Activated CD4-positive, alpha-beta T cell treated with anti-CD3 and anti-CD28 coated beads, Interleukin-2, amount 10 ng/mL, durations not matched to agents 24 days and 14 days (primary cell): ENCODE measurements at regions of chr19 and their contacts with region 1.

Region 1: GRCh38 chr19:45079063-45079910 is at the start of gene GEMIN7:
- DNase-seq: peak; percentile 95
- H3K4me3 Mint-ChIP-seq: peak within 1 kb of the TSS; percentile 100
- H3K27ac Mint-ChIP-seq: peak within 1 kb of the TSS; percentile 94
- H3K4me1 Mint-ChIP-seq: peaks cover 31% of the 10 kb centered on the region
- H3K27me3 Mint-ChIP-seq: no peaks in the 10 kb centered on the region
- total RNA-seq, gene GEMIN7: 51.5 and 54.3 TPM in 2 replicates

Region 2: GRCh38 chr19:45001087-45001739 is 78.1 kb before region 1 on chr19 and contains the start of gene RELB:
- intact Hi-C with region 1: loop called (anchors 5 kb)
- DNase-seq: peak; percentile 100
- H3K4me3 Mint-ChIP-seq: peak within 1 kb of the TSS; percentile 99
- H3K27ac Mint-ChIP-seq: peak within 1 kb of the TSS; percentile 100
- H3K4me1 Mint-ChIP-seq: peaks cover 13% of the 10 kb centered on the region
- H3K27me3 Mint-ChIP-seq: no peaks in the 10 kb centered on the region
- total RNA-seq, gene RELB: 67.6 and 72.7 TPM in 2 replicates

Region 3: GRCh38 chr19:45038931-45039893 is 40.1 kb before region 1 on chr19 and contains the start of gene CLASRP:
- intact Hi-C with region 1: loop called (anchors 2 kb)
- DNase-seq: peak; percentile 97
- H3K4me3 Mint-ChIP-seq: peak within 1 kb of the TSS; percentile 88
- H3K27ac Mint-ChIP-seq: peak within 1 kb of the TSS; percentile 95
- H3K4me1 Mint-ChIP-seq: peaks cover 26% of the 10 kb centered on the region
- H3K27me3 Mint-ChIP-seq: no peaks in the 10 kb centered on the region
- total RNA-seq, gene CLASRP: 107 and 111 TPM in 2 replicates

Region 4: GRCh38 chr19:45103156-45103507 is 23.8 kb after region 1 on chr19:
- intact Hi-C with region 1: no loop called
- DNase-seq: peak; percentile 72
- H3K4me3 Mint-ChIP-seq: no peak overlapping the region
- H3K27ac Mint-ChIP-seq: no peak overlapping the region
- H3K4me1 Mint-ChIP-seq: peaks cover 27% of the 10 kb centered on the region
- H3K27me3 Mint-ChIP-seq: no peaks in the 10 kb centered on the region

Region 5: DNA sequence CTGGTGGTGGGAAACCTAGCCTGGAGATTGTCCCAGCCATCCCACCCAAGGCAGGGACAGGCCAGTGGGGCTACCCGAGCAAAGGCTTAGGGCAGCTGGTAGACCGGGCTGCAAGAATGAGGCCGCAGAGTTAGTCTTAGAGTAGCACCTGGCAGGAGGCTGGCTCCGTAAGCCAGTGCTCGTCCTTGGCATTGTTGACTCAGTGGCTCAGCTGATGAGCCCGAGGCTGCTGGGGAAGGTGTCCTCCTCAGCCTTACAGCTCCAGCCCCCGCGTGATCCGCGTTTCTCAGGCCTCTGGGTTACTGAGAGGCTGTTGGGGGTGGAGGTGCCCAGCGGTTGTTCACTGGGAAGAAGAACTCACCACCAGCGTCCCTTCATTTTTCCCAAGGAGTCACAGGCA is 38.4 kb after region 1 on chr19:
- intact Hi-C with region 1: loop called (anchors 2 kb)
- DNase-seq: no peak
- H3K4me3 Mint-ChIP-seq: no peak overlapping the region
- H3K27ac Mint-ChIP-seq: peak overlapping the region; percentile 58
- H3K4me1 Mint-ChIP-seq: peaks cover 49% of the 10 kb centered on the region
- H3K27me3 Mint-ChIP-seq: no peaks in the 10 kb centered on the region

Region 6: DNA sequence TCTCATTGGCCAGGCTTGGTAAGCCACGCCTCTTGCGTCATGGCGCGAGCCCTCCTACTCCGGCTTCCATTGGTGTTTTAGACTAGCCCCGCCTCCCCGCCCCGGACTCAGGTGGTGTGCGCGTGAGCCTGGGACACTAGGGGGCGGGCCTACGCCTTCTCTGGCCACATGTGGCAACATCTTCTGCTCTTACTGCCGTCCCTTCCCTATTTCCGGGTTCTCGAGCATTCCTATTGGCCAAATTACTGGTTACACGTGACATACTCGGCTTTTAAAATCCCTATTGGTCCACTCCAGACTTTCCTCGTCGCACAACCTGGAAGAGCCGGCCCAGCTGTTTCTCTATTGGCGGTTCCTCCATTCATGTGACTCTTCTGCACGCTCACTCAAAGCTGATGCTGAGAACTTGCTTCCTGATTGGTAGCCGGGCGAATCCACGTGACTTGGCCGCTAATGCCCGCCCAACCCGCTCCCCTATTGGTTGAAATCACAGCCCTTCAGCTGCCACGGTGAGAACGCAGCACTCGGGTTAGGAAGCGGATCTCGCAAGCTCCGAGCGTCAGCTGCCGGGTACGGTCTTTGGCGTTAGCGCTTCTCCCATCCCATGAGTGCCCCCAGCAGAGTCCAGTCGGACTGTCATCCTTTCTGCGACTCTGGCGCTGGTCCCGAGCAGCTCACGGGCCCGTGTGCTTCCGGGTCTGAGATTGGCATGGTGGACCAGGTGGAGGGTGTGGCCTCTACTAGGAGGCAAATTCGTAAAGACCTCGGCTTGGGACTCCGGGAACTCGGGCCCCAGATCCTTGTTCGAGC is 99.2 kb after region 1 on chr19 and contains the start of gene BLOC1S3:
- intact Hi-C with region 1: loop called (anchors 1 kb)
- DNase-seq: peak; percentile 100
- H3K4me3 Mint-ChIP-seq: peak within 1 kb of the TSS; percentile 88
- H3K27ac Mint-ChIP-seq: peak within 1 kb of the TSS; percentile 93
- H3K4me1 Mint-ChIP-seq: peaks cover 20% of the 10 kb centered on the region
- H3K27me3 Mint-ChIP-seq: no peaks in the 10 kb centered on the region
- total RNA-seq, gene BLOC1S3: 10.1 and 12.2 TPM in 2 replicates